A549 (cell line): ENCODE measurements at regions of chr10 and their contacts with region 1.

Region 1: GRCh38 chr10:117216611-117217195 is 19.4 kb downstream of the KCNK18 start:
- DNase-seq: peak; percentile 78 to 84
- ATAC-seq: peak; percentile 57 to 84
- H3K4me3 ChIP-seq: peak overlapping the region; percentile 63
- H3K27ac ChIP-seq: peak overlapping the region; percentile 74 to 94
- H3K4me1 ChIP-seq: peaks cover 37% of the 10 kb centered on the region
- CTCF ChIP-seq: peak; percentile 100
- EP300 ChIP-seq: no peak
- POLR2A ChIP-seq: no peak
- RAD21 ChIP-seq: peak; percentile 94 to 99

Region 2: DNA sequence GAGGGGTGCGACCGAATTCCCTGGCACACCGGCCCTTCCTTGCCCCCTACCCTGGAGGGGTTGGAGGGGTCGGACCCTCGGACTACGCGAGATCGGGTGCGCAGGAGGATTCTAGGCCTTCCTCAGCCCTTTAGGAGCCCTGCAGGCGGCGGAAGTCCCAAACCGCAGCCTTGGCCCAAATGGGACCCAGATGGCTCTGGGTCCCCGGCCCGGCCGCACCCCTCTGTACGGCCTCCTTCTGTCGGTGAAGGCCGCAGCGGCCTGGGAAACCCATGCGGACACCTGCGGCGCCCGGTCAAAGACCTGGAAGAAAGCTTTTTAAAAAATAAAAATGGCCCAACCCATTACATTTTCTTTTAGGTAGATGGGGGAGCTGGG is 76.2 kb before region 1 on chr10:
- CTCF ChIA-PET with region 1: no interaction called
- POLR2A ChIA-PET with region 1: no interaction called
- DNase-seq: no peak
- ATAC-seq: no peak
- H3K4me3 ChIP-seq: no peak overlapping the region
- H3K27ac ChIP-seq: no peak overlapping the region
- H3K4me1 ChIP-seq: 0 out of 3 replicates have a peak, but pooled peaks cover 4% of the 10 kb centered on the region
- CTCF ChIP-seq: no peak
- EP300 ChIP-seq: no peak
- POLR2A ChIP-seq: no peak
- RAD21 ChIP-seq: no peak

Region 3: DNA sequence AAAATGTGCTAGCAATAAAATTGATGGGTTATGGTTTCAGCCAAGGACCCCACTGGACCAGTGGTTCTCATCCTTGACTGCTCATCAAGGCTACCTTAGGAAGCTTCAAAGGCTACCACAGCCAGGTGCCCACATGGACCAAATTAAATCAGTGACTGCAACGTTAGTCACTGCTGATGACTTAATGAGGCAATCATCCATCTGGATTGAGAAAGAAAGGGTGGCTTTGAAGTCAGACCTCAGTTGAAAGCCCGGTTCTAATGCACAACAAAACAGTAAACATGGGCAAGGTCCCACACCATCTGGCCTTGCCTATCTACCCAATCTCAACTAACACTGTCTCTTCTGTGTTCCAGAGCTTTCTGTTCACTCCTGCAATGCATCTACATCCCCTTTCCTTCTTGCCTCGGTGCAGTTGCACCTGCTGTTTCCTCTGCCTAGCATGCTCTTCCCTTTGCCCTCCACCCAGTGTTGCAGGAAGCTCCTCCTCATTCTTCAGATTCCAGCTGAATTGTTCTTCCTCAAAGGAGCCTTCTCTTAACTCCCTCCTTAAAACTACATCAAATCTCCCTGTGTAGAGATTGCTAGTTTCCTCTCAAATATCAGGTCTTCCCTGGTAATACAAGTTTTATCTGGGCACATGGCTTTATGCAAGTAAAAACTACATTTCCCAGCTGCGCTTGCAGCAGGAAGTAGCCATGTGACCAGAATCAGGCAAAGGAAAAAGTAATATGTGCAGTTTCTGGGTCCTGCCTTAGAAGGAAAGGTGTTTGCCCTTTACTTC is 29.7 kb before region 1 on chr10:
- CTCF ChIA-PET with region 1: interaction called, 11 read pairs
- POLR2A ChIA-PET with region 1: no interaction called
- DNase-seq: peak in 1 of 2 experiments; percentile 20
- ATAC-seq: peak in 1 of 2 experiments; percentile 70; a peak in 3 of 6 replicates
- H3K4me3 ChIP-seq: no peak overlapping the region
- H3K27ac ChIP-seq: no peak overlapping the region
- H3K4me1 ChIP-seq: peaks cover 5% of the 10 kb centered on the region; the same call in 1 of the 3 replicates
- CTCF ChIP-seq: no peak
- EP300 ChIP-seq: no peak
- POLR2A ChIP-seq: no peak
- RAD21 ChIP-seq: no peak

Region 4: DNA sequence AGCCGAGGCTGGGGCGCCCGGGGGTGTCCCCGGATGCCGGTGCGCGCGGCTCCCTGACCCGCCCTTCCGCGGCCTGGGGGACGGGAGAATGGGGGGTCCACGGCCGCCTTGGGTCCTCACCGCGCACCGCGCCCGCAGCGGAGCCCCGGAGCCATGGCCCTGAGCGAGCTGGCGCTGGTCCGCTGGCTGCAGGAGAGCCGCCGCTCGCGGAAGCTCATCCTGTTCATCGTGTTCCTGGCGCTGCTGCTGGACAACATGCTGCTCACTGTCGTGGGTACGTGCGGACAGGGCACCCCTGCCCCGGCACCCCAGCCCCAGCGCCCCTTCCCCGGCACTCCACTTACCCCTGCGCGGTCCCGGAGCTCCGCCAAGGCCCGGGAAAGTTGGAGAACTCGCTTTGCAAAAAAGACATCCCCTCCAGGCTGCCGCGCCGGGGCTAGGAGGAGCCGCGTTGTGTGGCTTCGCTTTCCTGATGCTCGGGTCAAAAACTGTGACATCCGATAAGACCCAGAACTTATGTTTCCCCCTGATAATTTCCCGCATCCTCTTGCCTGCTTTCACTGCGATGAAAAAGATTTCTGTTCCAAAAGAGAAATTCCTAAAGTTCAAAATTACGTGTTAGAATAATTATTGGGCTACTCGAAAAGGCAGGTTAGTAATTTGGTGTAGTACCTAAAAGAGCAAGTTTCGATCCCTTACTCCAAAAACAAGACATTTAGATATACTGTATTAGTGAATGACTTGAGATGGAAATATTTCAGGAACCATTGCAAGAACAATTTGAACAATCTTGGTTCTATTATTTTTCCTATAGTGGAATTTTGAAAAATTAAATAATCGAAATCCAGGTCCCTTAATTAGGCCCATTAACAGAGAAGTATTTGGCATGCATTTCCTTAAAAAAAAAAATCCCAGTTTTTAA is 25.1 kb after region 1 on chr10:
- CTCF ChIA-PET with region 1: interaction called, 22 read pairs
- POLR2A ChIA-PET with region 1: no interaction called
- DNase-seq: no peak
- ATAC-seq: peak; percentile 45 to 66; a peak in 3 of 6 replicates
- H3K4me3 ChIP-seq: peak overlapping the region; percentile 47
- H3K27ac ChIP-seq: peak overlapping the region in 1 of 2 experiments; percentile 40; a peak in 2 of 6 replicates
- H3K4me1 ChIP-seq: 0 out of 3 replicates have a peak, but pooled peaks cover 3% of the 10 kb centered on the region
- CTCF ChIP-seq: no peak
- EP300 ChIP-seq: no peak
- POLR2A ChIP-seq: no peak
- RAD21 ChIP-seq: no peak

Region 5: DNA sequence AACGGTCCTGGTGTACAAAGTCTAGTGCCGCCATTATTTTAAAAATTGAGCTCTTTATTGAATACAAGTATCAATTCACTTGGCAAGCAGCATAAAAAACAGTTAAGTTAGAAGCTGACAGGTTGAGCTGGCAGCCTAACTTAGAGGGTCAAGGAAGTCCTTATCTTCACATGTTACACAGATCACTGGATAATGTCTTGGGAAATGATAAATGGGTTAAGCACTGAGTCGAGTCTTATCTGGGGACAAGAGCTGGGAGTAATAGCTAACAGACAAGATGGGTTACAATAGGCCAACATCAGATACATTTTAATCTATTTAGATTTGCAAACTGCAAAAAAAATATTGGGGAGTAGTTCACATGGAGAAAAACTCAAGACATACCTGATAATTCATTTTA is 58.4 kb after region 1 on chr10:
- CTCF ChIA-PET with region 1: interaction called, 13 read pairs
- POLR2A ChIA-PET with region 1: no interaction called
- DNase-seq: no peak
- ATAC-seq: no peak
- H3K4me3 ChIP-seq: no peak overlapping the region
- H3K27ac ChIP-seq: no peak overlapping the region
- H3K4me1 ChIP-seq: peaks cover 10% of the 10 kb centered on the region
- CTCF ChIP-seq: no peak
- EP300 ChIP-seq: no peak
- POLR2A ChIP-seq: no peak
- RAD21 ChIP-seq: no peak

Region 6: GRCh38 chr10:117312430-117312829 is 95.7 kb after region 1 on chr10:
- CTCF ChIA-PET with region 1: interaction called, 221 read pairs
- POLR2A ChIA-PET with region 1: no interaction called
- DNase-seq: no peak
- ATAC-seq: no peak
- H3K4me3 ChIP-seq: no peak overlapping the region
- H3K27ac ChIP-seq: no peak overlapping the region
- H3K4me1 ChIP-seq: peaks cover 17% of the 10 kb centered on the region; the same call in 1 of the 3 replicates
- CTCF ChIP-seq: no peak
- EP300 ChIP-seq: no peak
- POLR2A ChIP-seq: no peak
- RAD21 ChIP-seq: no peak

Region 7: DNA sequence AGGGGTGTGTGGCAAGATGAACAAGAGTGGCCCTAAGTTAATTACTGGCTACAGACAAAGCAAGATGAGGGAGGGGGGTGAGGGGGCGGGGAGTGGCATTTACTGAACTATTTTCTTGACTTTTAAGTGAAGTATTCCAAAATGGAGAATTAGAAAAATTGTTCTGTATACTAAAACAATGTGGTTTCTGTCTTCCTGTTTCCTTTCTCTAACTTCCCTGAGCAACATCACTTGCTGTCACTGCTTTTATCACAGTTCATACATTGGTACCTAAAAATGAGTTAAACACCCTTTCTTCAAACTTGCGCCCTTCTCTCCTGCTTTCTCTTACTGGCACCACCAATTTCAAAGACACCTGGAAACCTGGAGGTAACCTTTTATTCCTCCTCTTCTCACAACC is 137.0 kb after region 1 on chr10:
- CTCF ChIA-PET with region 1: interaction called, 11 read pairs
- POLR2A ChIA-PET with region 1: no interaction called
- DNase-seq: no peak
- ATAC-seq: no peak
- H3K4me3 ChIP-seq: no peak overlapping the region
- H3K27ac ChIP-seq: peak overlapping the region in 1 of 2 experiments; percentile 52; a peak in 3 of 6 replicates
- H3K4me1 ChIP-seq: peaks cover 82% of the 10 kb centered on the region
- CTCF ChIP-seq: no peak
- EP300 ChIP-seq: no peak
- POLR2A ChIP-seq: no peak
- RAD21 ChIP-seq: no peak

Region 8: DNA sequence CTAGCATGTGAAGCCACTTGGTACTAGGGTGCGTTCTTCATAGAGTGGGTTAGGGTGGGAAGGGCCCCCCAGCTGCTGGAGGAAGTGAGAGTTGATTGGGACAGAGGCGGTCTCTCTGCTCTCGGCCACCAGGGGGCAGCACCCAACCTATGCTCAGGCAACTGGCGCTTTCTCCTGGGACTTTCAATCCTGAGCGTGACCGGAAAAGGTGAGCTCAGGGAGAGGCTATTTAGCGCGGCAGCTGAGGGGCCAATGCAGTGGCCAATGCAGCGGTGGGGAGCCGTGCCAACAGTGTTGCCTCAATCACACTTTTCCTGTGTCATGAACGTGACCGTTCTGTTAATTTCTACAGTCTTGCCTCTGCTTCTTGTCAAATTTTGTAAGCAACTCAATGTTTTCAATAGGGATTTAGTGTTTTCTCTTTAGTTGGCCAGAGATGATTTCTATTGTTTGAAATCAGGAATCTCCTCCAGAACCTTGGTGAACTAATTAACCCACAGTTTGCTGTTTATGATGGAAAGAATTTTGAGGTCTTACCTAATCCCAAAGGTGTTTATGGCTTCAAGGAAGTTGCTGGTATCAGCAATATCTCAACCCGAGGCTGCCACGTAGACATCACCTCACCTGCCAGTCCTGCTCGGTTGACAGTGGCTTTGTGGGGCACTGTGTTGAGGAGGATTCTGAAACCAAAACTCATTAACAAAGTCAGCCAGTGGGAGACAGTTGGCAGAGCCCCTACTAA is 226.4 kb after region 1 on chr10:
- CTCF ChIA-PET with region 1: interaction called, 22 read pairs
- POLR2A ChIA-PET with region 1: interaction called, 3 read pairs
- DNase-seq: peak; percentile 77 to 84
- ATAC-seq: peak; percentile 79 to 94
- H3K4me3 ChIP-seq: no peak overlapping the region
- H3K27ac ChIP-seq: peak overlapping the region; percentile 37 to 59; a peak in 5 of 6 replicates
- H3K4me1 ChIP-seq: peaks cover 27% of the 10 kb centered on the region
- CTCF ChIP-seq: peak; percentile 82
- EP300 ChIP-seq: no peak
- POLR2A ChIP-seq: no peak
- RAD21 ChIP-seq: peak; percentile 66 to 67

Region 9: GRCh38 chr10:117830787-117831212 is 614.1 kb after region 1 on chr10:
- CTCF ChIA-PET with region 1: no interaction called
- POLR2A ChIA-PET with region 1: no interaction called
- DNase-seq: no peak
- ATAC-seq: no peak
- H3K4me3 ChIP-seq: no peak overlapping the region
- H3K27ac ChIP-seq: no peak overlapping the region
- H3K4me1 ChIP-seq: no peaks in the 10 kb centered on the region
- CTCF ChIP-seq: no peak
- EP300 ChIP-seq: no peak
- POLR2A ChIP-seq: no peak
- RAD21 ChIP-seq: no peak